ENCODE measurements at regions of chr9 and their contacts with region 1.

Region 1: DNA sequence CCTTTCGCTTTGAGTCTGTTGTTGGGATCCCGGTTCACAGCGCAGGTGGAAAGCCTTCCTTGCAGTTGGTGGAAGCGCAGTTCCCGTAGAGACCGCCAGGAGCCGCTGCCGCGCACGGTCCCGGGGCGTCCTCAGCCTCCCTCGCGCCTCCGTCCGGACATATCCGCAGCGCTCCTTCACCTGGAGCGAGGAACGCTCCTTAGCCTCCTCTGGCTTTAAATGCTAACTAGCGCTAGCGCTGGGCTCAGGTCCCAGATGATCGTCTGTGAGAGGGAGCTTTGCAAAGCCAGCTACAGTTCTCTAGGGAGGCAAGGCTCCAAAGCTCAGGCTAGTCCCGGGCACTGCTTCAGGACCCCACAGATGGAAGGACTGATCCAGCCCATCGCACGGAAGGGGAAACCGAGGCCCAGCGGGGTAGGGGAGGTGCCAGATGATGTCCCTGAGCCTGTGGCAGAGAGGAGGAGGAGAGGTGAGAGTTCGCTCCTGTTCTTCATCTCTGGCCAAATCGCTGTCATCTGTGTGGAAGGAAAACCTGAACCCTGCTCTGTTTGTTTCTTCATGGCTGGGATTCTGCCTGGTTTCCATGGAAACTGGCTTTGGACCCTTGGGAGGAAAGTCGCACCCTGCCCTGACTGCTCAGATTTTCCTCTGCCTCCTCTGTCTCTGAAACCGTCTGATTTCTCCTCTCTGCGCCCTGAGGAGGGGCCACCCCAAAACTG is 31.4 kb downstream of the COL15A1 start:
- DNase-seq: peak; percentile 87
- ATAC-seq: peak; percentile 96
- H3K4me3 Mint-ChIP-seq: peak overlapping the region; percentile 4
- H3K27ac Mint-ChIP-seq: no peak overlapping the region
- H3K4me1 Mint-ChIP-seq: peaks cover 16% of the 10 kb centered on the region
- H3K27me3 Mint-ChIP-seq: peaks cover 20% of the 10 kb centered on the region

Region 2: DNA sequence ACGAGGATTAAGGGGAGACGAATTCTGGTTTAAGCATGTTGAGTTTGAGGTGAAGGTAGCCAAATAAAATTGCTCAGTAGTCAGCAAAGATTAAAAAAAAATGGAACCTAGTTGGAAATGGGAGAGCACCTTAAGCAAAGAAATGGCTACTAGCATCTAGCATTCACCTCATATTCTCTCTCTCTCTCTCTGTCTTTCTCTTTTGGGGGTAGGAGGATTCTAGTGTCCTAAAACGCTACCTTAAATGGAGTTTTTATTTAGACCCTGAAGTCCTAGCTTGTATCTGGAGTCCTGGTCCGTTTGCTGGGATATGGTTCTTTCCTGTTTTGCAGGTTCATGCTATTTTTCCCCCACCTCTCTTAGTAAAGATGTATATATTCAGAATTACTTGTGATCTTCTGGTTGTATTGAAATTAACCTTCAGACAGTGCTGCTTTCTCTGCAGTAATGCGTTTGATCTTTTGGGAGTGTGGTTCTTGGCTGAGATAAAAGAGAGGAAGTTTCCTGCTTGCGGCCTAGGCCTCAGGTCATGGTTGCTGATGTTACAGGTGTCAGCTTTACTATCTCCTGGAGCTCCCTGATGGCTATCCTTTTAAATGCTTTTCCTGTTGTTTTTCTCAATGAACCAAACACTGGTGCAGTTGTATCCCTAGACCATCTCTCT is 137.7 kb after region 1 on chr9:
- CTCF ChIA-PET with region 1: interaction called, 11 read pairs
- POLR2A ChIA-PET with region 1: no interaction called
- DNase-seq: peak; percentile 78
- ATAC-seq: peak; percentile 98
- H3K4me3 Mint-ChIP-seq: peak overlapping the region; percentile 61
- H3K27ac Mint-ChIP-seq: peak overlapping the region; percentile 86
- H3K4me1 Mint-ChIP-seq: peaks cover 91% of the 10 kb centered on the region
- H3K27me3 Mint-ChIP-seq: no peaks in the 10 kb centered on the region

Region 3: DNA sequence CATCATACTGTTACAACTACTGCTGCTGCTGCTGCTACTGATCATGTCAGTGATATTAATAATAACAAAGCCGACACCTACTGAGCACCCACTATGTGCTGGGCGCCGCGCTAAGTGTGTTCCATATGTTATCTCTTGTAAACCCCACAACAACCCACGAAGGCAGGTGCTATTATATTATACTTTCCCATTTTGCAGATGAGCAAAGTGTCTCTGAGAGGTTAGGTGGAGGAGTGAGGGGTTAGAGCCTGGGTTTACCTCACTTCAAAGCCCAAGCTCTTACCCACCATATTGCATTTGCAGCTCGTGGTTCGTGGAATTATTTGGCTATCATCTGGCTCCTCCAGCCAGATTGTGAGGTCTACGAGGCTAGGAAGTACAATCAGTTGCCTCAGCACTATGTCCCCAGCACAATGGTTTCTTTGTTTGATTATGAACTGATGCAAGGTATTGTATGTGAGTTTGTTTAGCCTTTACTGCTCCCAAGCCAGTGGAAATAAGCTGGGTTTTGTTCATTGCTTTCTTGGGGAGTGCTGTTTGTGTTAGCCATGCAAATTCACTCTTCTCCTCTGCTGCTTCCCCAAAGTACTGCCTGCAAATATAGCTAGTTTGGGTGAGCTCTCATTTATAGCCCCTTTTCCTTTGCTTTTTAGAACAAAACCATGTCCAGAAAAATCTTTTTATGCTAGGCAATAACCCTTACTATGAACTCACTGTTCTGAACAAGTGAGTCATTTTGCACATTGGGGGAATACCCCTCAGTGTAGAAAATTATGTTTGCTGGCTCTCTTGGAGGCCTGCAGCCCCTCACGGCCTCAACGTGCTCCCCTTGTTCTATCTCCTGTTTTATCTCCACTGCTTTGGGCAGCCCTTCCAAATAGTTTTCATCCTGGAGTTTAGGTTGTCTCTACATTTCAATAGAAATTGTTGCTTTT is 198.7 kb after region 1 on chr9:
- CTCF ChIA-PET with region 1: no interaction called
- POLR2A ChIA-PET with region 1: no interaction called
- DNase-seq: peak; percentile 16
- ATAC-seq: no peak
- H3K4me3 Mint-ChIP-seq: no peak overlapping the region
- H3K27ac Mint-ChIP-seq: no peak overlapping the region
- H3K4me1 Mint-ChIP-seq: peaks cover 8% of the 10 kb centered on the region
- H3K27me3 Mint-ChIP-seq: no peaks in the 10 kb centered on the region